Activated naive CD4-positive, alpha-beta T cell treated with anti-CD3 and anti-CD28 coated beads for 36 hours (primary cell): ENCODE measurements at regions of chr9 and their contacts with region 1.

Region 1: DNA sequence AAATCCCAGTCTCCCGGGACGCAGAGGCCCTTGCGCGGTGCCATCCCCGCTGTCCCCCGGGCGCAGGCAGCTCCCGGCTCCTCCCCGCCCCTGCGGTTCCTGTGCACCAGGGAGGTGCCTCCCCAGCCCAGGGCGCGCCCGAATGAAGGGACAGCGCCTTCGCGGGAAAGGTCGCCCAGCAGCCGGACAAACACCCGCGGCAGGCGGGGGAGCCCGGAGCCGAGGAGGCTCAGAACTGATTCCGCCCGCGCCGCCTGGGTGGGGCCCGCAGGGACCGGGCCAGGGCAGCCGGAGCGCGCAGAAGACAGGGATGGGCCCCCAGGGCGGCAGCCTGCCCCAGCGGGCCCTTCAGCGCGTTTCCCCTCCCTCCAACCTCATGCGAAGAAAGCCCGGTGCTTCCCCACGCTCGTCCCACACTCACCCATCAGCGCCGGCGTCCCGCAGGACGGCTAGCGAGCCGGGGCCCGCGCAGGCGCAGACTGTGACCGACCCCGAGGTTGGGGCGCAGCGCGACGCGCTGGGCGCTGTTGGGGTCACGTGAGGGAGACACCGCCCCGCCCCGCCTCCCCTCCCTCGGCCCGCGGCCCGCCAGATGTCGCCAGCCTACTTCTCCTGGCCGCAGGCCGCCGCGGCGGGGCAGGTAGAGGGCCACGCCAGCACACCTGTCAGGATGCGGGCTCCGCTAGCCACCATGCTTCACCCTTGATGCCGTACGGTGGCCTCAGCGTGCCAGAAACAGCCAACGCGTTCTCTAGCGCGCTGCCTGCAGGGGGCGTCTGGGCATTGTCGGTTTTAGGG is at the start of gene SLC25A51:
- DNase-seq: peak; percentile 97
- H3K4me3 Mint-ChIP-seq: peak within 1 kb of the TSS; percentile 85
- H3K27ac Mint-ChIP-seq: peak within 1 kb of the TSS; percentile 87
- H3K4me1 Mint-ChIP-seq: peaks cover 16% of the 10 kb centered on the region
- H3K27me3 Mint-ChIP-seq: no peaks in the 10 kb centered on the region
- total RNA-seq, gene SLC25A51: 20.0 to 20.3 TPM

Region 2: DNA sequence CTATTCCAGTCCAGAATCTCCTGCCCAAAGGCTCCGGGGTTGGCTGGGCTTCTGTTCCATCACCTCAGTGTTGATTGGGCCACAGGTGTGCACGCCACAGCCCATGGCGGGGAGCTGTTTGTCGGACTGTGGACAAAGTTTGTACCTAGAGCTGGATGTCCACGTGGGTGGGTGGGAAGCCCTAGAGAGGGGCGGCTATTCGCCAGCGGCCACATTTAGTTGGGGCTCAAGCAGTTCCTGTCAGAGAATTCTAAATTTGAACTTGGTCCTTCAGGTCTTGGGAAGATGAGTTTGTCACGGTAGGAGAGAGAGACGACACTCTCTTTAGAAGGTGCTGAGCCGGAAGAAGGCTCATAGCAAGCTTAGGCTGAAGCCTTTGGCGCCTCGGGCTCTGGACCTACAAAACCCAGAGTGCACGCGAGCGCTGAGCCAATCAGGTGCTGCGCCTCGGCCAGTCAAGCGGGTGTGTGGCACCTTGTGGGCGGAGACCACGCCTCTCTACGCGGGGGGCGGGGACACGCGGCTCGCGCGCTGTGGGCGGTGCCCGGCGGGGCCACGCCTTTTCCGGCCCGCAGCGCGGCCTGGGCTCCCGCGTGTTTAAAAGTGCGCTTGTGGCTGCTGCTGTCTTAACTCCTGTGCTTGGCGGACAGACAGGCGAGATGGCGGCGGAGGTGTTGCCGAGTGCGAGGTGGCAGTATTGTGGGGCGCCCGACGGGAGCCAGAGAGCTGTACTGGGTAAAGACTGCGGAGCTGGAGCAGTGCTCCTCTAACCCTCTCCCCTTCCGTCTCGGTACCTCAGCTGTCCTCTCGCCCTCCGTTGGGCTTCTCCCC is 418.2 kb before region 1 on chr9 and contains the start of gene POLR1E:
- CTCF ChIA-PET with region 1: no interaction called
- intact Hi-C with region 1: loop called (anchors 1 kb)
- DNase-seq: peak; percentile 97
- H3K4me3 Mint-ChIP-seq: peak within 1 kb of the TSS; percentile 99
- H3K27ac Mint-ChIP-seq: peak within 1 kb of the TSS; percentile 85
- H3K4me1 Mint-ChIP-seq: peaks cover 39% of the 10 kb centered on the region
- H3K27me3 Mint-ChIP-seq: peaks cover 6% of the 10 kb centered on the region
- total RNA-seq, gene POLR1E: 60.7 to 62.9 TPM

Region 3: DNA sequence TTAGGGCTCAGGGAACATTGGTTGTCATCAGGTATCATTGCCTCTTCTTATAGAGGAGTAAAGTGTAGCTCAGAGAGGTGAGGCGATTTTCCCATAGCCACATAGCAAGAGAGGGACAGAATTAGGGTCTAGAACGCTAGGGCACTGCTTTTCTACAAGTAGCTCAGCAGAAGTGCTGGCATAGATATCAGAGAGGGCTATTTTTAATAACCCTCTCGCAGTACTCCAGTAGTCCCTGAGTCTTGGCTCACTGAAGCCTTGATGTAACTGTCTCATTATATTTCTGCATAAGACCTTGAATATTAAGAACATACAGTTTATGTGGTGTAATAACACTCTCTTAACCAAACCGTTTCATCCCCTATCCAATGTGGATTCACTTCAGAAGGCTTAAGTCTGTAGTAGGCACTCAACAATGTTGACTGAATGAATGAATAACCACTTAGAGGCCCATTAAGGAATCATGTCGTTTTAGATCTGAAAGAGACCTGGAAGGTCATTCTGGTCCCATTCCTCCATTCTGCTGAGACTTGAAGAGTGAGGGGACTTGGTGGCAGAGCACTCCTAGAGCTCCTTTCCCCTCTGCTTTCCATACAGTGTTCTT is 257.8 kb before region 1 on chr9:
- CTCF ChIA-PET with region 1: no interaction called
- intact Hi-C with region 1: loop called (anchors 5 kb)
- DNase-seq: no peak
- H3K4me3 Mint-ChIP-seq: no peak overlapping the region
- H3K27ac Mint-ChIP-seq: no peak overlapping the region
- H3K4me1 Mint-ChIP-seq: peaks cover 3% of the 10 kb centered on the region
- H3K27me3 Mint-ChIP-seq: peaks cover 23% of the 10 kb centered on the region

Region 4: DNA sequence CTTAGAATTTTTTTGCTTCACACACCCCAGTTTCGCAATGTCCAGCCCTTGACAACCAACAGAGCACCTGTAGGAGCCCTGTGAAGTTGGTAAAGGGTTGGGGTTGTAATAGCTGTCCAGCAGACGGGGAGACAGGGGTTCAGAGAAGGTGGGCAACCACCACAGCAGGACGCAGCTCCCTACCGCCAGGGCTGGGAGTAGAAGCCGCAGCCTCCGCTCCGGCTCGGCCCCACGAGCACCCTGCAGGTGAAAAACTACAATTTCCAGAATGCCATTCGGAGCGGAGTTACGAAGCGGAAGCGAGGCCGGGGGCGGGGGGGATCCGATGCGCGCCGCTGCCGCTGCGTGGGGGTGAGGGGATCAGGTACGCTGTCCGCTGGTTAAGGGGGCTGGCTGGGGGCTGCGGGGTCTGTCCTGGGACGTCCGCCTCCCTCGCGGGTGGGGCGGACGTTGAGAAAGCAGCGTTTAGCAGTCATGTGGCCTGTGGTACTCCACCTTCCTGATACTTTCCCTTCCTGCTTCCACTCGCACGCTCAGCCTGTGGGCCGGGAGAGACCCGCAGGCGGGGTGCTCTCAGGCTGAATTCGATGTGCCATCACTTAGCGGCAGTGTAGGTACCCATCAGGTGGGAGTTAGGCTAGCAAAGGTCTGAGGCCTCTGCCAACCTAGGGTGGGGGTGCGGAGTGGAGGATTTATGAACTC is 150.2 kb before region 1 on chr9 and contains the start of gene TRMT10B:
- CTCF ChIA-PET with region 1: no interaction called
- intact Hi-C with region 1: loop called (anchors 1 kb)
- DNase-seq: peak; percentile 77
- H3K4me3 Mint-ChIP-seq: peak within 1 kb of the TSS; percentile 96
- H3K27ac Mint-ChIP-seq: peak within 1 kb of the TSS; percentile 85
- H3K4me1 Mint-ChIP-seq: peaks cover 32% of the 10 kb centered on the region
- H3K27me3 Mint-ChIP-seq: no peaks in the 10 kb centered on the region
- total RNA-seq, gene TRMT10B: 8.1 to 9.5 TPM

Region 5: GRCh38 chr9:37800631-37801286 is 103.1 kb before region 1 on chr9 and contains the start of gene DCAF10:
- CTCF ChIA-PET with region 1: no interaction called
- intact Hi-C with region 1: loop called (anchors 1 kb)
- DNase-seq: peak; percentile 89
- H3K4me3 Mint-ChIP-seq: peak within 1 kb of the TSS; percentile 93
- H3K27ac Mint-ChIP-seq: peak within 1 kb of the TSS; percentile 79
- H3K4me1 Mint-ChIP-seq: peaks cover 38% of the 10 kb centered on the region
- H3K27me3 Mint-ChIP-seq: no peaks in the 10 kb centered on the region
- total RNA-seq, gene DCAF10: 9.4 to 10.9 TPM

Region 6: DNA sequence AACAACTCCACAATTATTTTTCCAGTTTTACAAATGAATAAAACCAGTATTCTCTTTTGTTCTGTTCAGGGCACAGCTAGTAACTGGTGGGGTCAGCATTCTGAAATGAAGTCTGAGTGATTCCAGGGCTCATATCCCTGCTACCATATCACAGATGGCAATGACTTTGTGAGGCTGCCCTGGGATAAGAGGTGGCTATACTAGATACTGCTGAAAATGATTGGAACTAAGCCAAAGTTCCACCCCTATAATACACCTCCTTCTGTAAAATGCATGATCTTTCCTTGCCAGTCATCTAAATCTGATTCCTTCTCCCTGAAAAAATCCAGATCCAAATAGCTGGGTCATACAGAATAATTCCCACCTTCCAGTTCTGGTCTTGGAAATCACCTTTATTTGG is 14.3 kb before region 1 on chr9:
- CTCF ChIA-PET with region 1: no interaction called
- intact Hi-C with region 1: no loop called
- DNase-seq: no peak
- H3K4me3 Mint-ChIP-seq: no peak overlapping the region
- H3K27ac Mint-ChIP-seq: no peak overlapping the region
- H3K4me1 Mint-ChIP-seq: peaks cover 2% of the 10 kb centered on the region
- H3K27me3 Mint-ChIP-seq: no peaks in the 10 kb centered on the region

Region 7: GRCh38 chr9:38068866-38069629 is 165.2 kb after region 1 on chr9 and contains the start of gene SHB:
- CTCF ChIA-PET with region 1: no interaction called
- intact Hi-C with region 1: loop called (anchors 1 kb)
- DNase-seq: peak; percentile 73
- H3K4me3 Mint-ChIP-seq: peak within 1 kb of the TSS; percentile 68
- H3K27ac Mint-ChIP-seq: no peak within 1 kb of the TSS
- H3K4me1 Mint-ChIP-seq: peaks cover 19% of the 10 kb centered on the region
- H3K27me3 Mint-ChIP-seq: peaks cover 8% of the 10 kb centered on the region
- total RNA-seq, gene SHB: 1.2 TPM

Region 8: DNA sequence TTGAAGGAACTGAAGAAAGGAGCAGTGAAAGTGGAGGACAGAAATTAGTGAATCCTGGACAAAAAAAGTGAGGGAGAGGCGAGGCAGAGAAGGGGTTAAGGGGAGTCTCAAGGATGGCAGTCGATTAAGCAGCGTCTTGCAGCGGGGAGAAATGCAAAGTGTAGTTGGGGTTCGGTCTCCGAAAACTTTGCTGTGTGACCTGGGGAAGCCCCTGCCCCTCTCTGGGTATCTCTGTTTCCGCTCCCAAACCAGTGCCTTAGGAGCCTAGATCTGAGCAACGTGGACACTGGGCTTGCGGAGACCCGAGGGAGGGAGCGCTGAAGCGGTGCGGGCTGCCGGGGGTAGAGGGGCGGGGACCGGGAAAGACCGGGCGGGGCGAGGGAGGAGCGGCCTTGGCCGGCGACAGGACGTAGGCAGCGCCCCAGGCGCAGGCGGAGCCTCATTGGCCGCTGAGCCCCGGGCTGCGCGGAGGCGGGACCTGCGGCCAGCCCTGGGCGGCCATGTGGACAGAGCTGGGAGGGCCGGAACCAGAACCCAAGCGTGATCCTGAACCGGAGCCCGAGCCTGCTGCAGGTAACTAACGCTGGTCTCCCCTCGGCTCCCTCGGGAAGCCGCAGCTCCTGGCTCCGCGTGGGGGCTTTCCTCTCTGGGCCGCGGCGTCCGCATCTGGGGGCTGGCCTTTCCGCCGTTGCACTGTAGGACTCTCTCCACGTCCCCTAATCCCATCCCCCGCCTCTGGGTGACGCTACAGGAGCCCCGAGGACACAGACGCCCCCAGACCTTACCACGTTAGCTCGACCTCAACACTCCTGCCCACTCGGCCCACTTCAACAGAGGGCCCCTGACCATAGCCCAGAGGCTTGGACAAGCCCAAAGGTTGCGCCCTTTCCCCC is 488.6 kb after region 1 on chr9 and contains the start of gene ALDH1B1:
- CTCF ChIA-PET with region 1: no interaction called
- intact Hi-C with region 1: loop called (anchors 5 kb)
- DNase-seq: peak; percentile 66
- H3K4me3 Mint-ChIP-seq: peak within 1 kb of the TSS; percentile 89
- H3K27ac Mint-ChIP-seq: peak within 1 kb of the TSS; percentile 30
- H3K4me1 Mint-ChIP-seq: peaks cover 13% of the 10 kb centered on the region
- H3K27me3 Mint-ChIP-seq: peaks cover 9% of the 10 kb centered on the region
- total RNA-seq, gene ALDH1B1: 14.1 to 17.9 TPM